Ascending aorta (tissue), 2 donors: ENCODE measurements at regions of chr7 and their contacts with region 1.

Region 1: DNA sequence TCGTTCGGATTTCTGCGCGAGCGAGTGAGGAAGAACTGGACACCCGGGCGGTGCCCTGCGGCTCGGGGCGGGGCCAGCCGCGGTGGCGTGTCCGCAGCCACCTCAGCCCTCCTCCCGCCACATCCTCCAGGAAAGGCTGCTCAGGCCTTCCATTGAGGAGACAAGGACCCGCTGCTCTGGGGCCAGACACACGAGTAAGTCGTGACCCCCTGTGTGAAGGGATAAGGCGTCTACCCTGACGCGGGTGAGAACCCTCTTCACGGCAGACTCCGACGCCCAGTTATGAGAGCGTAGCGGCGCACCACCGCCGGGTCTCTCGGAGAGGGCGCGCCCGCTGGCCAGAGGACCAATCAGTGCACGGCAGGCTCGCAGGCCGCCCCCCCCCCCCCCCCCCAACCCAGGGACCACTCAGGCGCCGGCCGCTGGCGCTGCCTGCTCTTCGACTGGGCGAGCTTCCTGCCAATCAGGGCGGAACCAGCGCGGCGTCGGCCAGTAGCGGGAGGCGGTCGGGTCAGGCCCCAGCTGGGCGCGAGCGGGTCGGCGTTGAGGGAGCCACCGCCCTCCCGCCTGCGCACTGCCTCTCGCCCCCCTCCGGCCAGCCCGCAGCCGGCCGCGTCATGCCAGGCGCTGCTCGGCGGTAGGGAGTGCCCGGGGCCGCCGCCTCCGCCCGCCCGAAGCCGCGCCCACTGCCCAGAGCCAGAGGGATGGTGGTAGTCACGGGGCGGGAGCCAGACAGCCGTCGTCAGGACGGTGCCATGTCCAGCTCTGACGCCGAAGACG is at the start of gene KCTD7:
- DNase-seq: peak; percentile 95 to 99
- H3K4me3 ChIP-seq: peak within 1 kb of the TSS; percentile 72 to 91
- H3K27ac ChIP-seq: peak within 1 kb of the TSS; percentile 95 to 97
- H3K4me1 ChIP-seq: peaks cover 9 to 15% of the 10 kb centered on the region in 2 donors
- H3K27me3 ChIP-seq: no peaks in the 10 kb centered on the region
- CTCF ChIP-seq: no peak
- total RNA-seq, gene KCTD7: 12.5 TPM

Region 2: DNA sequence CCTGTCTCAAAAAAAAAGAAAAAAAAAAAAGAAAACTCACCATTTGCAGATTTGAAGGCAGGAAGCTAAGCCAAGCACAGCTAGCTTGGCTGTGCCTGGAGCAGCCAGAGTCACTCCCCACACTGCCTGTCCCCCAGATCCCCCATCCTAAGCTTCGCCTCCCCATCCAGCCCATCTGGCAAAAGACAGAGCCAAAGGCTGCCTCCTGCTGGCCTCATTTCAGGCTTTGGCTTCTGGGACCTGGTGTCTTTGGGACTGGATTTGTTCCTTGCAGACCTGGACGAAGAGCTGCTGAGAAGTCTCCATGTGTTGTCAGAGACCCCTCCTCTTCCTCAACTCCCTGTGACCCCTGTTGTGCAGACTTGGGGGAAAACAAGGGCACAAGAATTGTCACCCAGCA is 544.9 kb before region 1 on chr7:
- intact Hi-C with region 1: no loop called
- DNase-seq: no peak
- H3K4me3 ChIP-seq: no peak overlapping the region
- H3K27ac ChIP-seq: no peak overlapping the region
- H3K4me1 ChIP-seq: no peaks in the 10 kb centered on the region
- H3K27me3 ChIP-seq: no peaks in the 10 kb centered on the region
- CTCF ChIP-seq: no peak

Region 3: GRCh38 chr7:66493235-66494181 is 135.0 kb before region 1 on chr7:
- intact Hi-C with region 1: loop called (anchors 1 kb)
- DNase-seq: peak; percentile 89 to 99
- H3K4me3 ChIP-seq: peak overlapping the region; percentile 61 to 76
- H3K27ac ChIP-seq: peak overlapping the region; percentile 89 to 94
- H3K4me1 ChIP-seq: peaks cover 0 to 6% of the 10 kb centered on the region in 2 donors
- H3K27me3 ChIP-seq: no peaks in the 10 kb centered on the region
- CTCF ChIP-seq: peak; percentile 29 to 54 (median 38)

Region 4: GRCh38 chr7:66591799-66592596 is 36.6 kb before region 1 on chr7:
- intact Hi-C with region 1: loop called (anchors 1 kb)
- DNase-seq: peak; percentile 67 to 95
- H3K4me3 ChIP-seq: peak overlapping the region; percentile 76 to 95
- H3K27ac ChIP-seq: peak overlapping the region; percentile 94 to 99
- H3K4me1 ChIP-seq: peaks cover 0 to 15% of the 10 kb centered on the region in 2 donors
- H3K27me3 ChIP-seq: no peaks in the 10 kb centered on the region
- CTCF ChIP-seq: no peak

Region 5: DNA sequence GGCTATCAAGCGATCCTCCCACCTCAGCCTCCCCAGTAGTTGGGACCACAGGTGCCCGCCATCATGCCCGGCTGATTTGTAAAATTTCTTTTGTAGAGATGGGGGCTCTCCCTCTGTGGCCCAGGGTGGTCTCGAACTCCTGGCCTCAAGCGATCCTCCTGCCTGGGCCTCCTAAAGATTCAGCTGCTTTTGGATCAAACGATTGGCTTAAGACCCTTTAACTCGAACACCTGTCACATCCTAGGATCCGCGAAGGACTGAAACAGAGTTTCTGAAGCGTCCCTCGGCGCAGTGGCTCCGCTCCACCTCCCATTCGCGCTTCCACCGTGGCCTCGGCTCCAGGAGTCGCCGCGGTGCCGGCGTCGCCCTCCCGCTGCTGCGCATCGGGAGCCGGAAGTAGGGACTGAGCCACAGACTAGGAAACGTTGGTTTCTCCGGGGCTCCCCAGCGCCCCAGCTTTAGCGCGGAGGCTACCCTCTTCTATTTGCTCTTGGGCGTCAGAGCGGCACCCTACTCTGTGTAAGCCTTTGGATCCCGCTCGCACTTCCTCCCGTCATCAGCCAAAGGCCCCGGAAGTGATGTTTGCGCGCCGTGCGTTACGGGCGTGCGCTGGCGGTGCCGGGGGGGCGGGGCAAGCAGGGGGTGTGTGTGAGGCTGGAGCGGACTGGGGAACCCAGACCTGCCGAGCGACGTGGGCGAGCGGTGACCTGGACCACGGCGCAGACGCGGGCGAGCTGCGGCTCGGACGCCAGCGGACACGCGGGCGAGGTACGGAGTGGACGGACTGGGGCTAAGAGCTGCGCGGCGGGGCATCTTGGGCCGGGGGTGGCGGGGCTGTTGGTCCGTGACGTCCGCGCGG is 53.2 kb after region 1 on chr7:
- intact Hi-C with region 1: loop called (anchors 2 kb)
- DNase-seq: peak; percentile 88 to 99
- H3K4me3 ChIP-seq: peak overlapping the region; percentile 68 to 87
- H3K27ac ChIP-seq: peak overlapping the region; percentile 99 to 100
- H3K4me1 ChIP-seq: peaks cover 4 to 11% of the 10 kb centered on the region in 2 donors
- H3K27me3 ChIP-seq: no peaks in the 10 kb centered on the region
- CTCF ChIP-seq: no peak

Region 6: GRCh38 chr7:66844552-66845378 is 216.2 kb after region 1 on chr7:
- intact Hi-C with region 1: loop called (anchors 1 kb)
- DNase-seq: peak; percentile 89 to 99
- H3K4me3 ChIP-seq: peak overlapping the region; percentile 69 to 78
- H3K27ac ChIP-seq: peak overlapping the region; percentile 94 to 96
- H3K4me1 ChIP-seq: peaks cover 0 to 9% of the 10 kb centered on the region in 2 donors
- H3K27me3 ChIP-seq: no peaks in the 10 kb centered on the region
- CTCF ChIP-seq: peak; percentile 16 to 51 (median 29)

Region 7: DNA sequence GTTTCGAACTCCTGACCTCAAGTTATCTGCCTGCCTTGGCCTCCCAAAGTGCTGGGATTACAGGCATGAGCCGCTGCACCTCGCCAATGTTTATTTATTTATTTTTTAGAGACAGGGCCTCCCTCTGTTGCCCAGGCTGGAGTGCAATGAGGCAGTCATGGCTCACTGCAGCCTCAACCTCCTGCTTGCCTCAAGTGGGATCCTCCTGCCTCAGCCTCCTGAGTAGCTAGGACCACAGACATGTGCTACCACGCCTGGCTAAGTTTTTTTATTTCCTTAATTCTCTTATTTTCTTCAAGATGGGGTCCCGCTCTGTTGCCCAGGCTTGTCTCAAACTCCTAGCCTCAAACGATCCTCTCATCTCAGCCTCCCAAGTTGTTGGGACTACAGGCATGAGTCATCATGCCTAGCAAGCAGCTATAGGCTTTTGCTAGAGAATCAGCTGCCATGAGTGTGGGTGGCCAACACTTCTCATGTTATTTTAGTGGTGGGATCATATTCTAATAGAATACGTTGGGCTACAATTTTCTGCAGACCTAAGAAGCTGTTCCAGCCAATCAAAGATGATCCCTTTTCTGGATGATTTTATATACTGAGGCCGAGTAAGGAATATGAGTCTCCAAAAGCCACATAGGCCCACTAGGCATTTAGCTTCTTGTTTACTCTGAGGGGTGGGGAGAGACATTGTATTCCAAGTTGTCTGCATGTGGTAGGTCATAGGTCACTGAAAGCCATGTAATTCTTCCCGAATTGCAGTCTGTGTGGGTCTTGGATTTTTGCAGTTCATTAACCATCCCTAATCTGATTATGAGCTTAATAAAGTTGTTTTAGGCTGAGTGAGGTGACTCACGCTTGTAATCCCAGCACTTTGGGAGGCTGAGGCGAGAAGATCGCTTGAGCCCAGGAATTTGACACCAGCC is 284.8 kb after region 1 on chr7:
- intact Hi-C with region 1: no loop called
- DNase-seq: no peak
- H3K4me3 ChIP-seq: no peak overlapping the region
- H3K27ac ChIP-seq: no peak overlapping the region
- H3K4me1 ChIP-seq: no peaks in the 10 kb centered on the region
- H3K27me3 ChIP-seq: no peaks in the 10 kb centered on the region
- CTCF ChIP-seq: no peak